B cell (primary cell): ENCODE measurements at regions of chr1 and their contacts with region 1.

Region 1: DNA sequence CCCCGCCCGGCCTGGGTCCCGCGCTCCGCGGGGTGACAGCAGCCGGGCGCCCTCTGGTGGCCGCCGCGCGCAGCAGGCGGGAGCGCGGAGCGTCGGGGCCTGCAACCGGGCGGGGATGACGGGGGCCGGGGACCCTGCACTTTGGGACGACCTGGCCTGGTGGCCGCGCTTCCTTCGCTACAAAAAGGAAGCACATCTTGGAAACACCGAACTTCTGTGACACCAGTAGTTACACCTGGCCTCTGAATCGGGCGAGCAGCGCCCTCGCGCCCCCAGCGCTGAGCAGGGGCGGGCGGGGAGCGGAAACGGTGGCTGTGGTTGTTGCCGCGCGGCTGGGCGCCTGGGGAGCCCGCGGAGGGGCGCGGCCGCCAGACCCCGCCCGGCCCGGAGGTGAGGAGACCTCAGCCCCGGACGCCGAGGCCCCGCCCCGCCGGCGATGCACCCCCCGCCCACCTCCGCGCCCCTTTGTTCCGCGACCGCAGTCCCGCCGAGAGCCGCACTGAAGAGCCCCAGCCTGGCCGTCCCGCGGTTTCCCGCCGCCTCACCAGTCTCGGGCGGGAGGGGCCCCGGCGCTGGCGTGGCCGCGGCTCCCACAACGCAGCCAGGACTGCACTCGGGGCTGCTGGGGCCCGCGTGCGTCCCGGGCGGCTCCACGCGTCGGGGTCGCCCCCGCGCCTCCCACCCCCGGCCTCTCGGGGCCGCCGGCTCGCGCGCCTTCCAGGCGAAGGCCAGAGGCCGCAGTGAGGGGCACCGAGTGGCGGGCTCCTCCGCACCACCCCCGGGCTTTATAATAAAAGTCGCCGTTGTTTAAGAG is 59.3 kb downstream of the H3-3A start:
- DNase-seq: peak; percentile 94
- ATAC-seq: peak; percentile 72
- H3K4me3 ChIP-seq: peak overlapping the region in 4 of 5 experiments; percentile 59 to 74 (median 62)
- H3K4me3 Mint-ChIP-seq: peak overlapping the region; percentile 90
- H3K27ac ChIP-seq: peak overlapping the region; percentile 96 to 97
- H3K27ac Mint-ChIP-seq: peak overlapping the region; percentile 99
- H3K4me1 ChIP-seq: peaks cover 68 to 75% of the 10 kb centered on the region in 2 donors
- H3K4me1 Mint-ChIP-seq: peaks cover 76% of the 10 kb centered on the region
- H3K27me3 ChIP-seq: no peaks in the 10 kb centered on the region
- H3K27me3 Mint-ChIP-seq: no peaks in the 10 kb centered on the region
- CTCF ChIP-seq: peak; percentile 79

Region 2: GRCh38 chr1:225467193-225468020 is 654.4 kb before region 1 on chr1:
- CTCF ChIA-PET with region 1: no interaction called
- POLR2A ChIA-PET with region 1: no interaction called
- intact Hi-C with region 1: loop called (anchors 5 kb)
- DNase-seq: peak; percentile 92
- ATAC-seq: peak; percentile 88
- H3K4me3 ChIP-seq: peak overlapping the region; percentile 68 to 83 (median 73)
- H3K4me3 Mint-ChIP-seq: peak overlapping the region; percentile 91
- H3K27ac ChIP-seq: peak overlapping the region; percentile 82 to 97
- H3K27ac Mint-ChIP-seq: peak overlapping the region; percentile 97
- H3K4me1 ChIP-seq: peaks cover 15 to 34% of the 10 kb centered on the region in 2 donors
- H3K4me1 Mint-ChIP-seq: peaks cover 37% of the 10 kb centered on the region
- H3K27me3 ChIP-seq: no peaks in the 10 kb centered on the region
- H3K27me3 Mint-ChIP-seq: no peaks in the 10 kb centered on the region
- CTCF ChIP-seq: no peak

Region 3: DNA sequence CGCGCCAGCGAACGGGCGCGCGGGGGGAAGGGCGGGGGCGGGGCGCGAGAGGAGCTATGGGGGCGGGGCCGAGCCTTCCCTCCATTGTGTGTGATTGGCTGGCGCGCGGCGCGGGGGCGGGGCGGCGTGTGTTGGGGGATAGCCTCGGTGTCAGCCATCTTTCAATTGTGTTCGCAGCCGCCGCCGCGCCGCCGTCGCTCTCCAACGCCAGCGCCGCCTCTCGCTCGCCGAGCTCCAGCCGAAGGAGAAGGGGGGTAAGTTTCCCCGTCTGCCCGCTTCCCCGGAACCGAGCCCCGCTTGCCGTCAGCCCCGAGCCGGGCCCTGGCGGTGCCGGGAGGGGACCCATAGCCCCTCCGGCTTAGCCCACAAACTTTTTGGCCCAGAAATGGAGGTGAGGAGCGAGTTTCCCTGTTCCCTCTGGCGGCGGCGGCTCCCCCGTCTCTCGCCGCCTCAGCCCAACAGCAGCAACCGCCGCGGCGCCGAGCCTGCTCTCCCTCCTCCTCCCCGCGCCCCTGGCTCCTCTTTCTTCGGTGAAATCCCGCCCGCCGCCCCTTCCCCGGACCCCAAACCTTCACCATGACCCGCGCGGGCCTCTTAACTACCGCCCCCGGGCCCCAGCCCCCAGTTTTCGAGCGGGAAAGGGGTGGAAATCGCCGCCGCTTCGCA is 59.1 kb before region 1 on chr1 and contains the start of gene H3-3A:
- CTCF ChIA-PET with region 1: interaction called, 76 read pairs
- POLR2A ChIA-PET with region 1: interaction called, 14 read pairs
- intact Hi-C with region 1: loop called (anchors 1 kb)
- DNase-seq: peak; percentile 98
- ATAC-seq: peak; percentile 81
- H3K4me3 ChIP-seq: peak within 1 kb of the TSS; percentile 86 to 100 (median 96)
- H3K4me3 Mint-ChIP-seq: peak within 1 kb of the TSS; percentile 100
- H3K27ac ChIP-seq: peak within 1 kb of the TSS; percentile 93 to 96
- H3K27ac Mint-ChIP-seq: peak within 1 kb of the TSS; percentile 99
- H3K4me1 ChIP-seq: peaks cover 33 to 34% of the 10 kb centered on the region in 2 donors
- H3K4me1 Mint-ChIP-seq: peaks cover 46% of the 10 kb centered on the region
- H3K27me3 ChIP-seq: no peaks in the 10 kb centered on the region
- H3K27me3 Mint-ChIP-seq: no peaks in the 10 kb centered on the region
- CTCF ChIP-seq: no peak
- total RNA-seq, gene H3-3A: 519 and 561 TPM in 2 replicates

Region 4: GRCh38 chr1:226135059-226135651 is 13.4 kb after region 1 on chr1:
- CTCF ChIA-PET with region 1: interaction called, 17 read pairs
- POLR2A ChIA-PET with region 1: interaction called, 9 read pairs
- intact Hi-C with region 1: no loop called
- DNase-seq: no peak
- ATAC-seq: no peak
- H3K4me3 ChIP-seq: no peak overlapping the region
- H3K4me3 Mint-ChIP-seq: no peak overlapping the region
- H3K27ac ChIP-seq: peak overlapping the region in 1 of 2 donors; percentile 57
- H3K27ac Mint-ChIP-seq: peak overlapping the region; percentile 99
- H3K4me1 ChIP-seq: peaks cover 46 to 54% of the 10 kb centered on the region in 2 donors
- H3K4me1 Mint-ChIP-seq: peaks cover 53% of the 10 kb centered on the region
- H3K27me3 ChIP-seq: no peaks in the 10 kb centered on the region
- H3K27me3 Mint-ChIP-seq: no peaks in the 10 kb centered on the region
- CTCF ChIP-seq: no peak

Region 5: DNA sequence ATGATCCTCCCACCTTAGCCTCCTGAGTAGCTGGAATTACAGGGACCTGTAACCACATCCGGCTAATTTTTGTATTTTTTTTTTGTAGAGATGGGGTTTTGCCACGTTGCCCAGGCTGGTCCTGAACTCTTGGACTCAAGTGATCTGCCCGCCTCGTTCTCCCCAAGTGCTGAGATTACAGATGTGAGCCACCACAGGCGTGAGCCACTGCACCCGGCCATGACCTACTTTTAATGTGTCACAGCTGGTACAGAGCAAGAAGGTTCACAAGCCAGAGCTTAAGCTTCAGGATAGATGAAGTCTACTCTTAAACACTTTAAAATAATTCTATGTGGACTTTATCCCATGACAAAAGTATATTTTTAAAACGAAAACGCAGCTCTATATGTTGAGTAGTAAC is 41.1 kb after region 1 on chr1:
- CTCF ChIA-PET with region 1: interaction called, 22 read pairs
- POLR2A ChIA-PET with region 1: no interaction called
- intact Hi-C with region 1: loop called (anchors 5 kb)
- DNase-seq: no peak
- ATAC-seq: no peak
- H3K4me3 ChIP-seq: no peak overlapping the region
- H3K4me3 Mint-ChIP-seq: no peak overlapping the region
- H3K27ac ChIP-seq: peak overlapping the region in 1 of 2 donors; percentile 42
- H3K27ac Mint-ChIP-seq: peak overlapping the region; percentile 46
- H3K4me1 ChIP-seq: peaks cover 30% of the 10 kb centered on the region in 2 donors
- H3K4me1 Mint-ChIP-seq: peaks cover 51% of the 10 kb centered on the region
- H3K27me3 ChIP-seq: no peaks in the 10 kb centered on the region
- H3K27me3 Mint-ChIP-seq: no peaks in the 10 kb centered on the region
- CTCF ChIP-seq: no peak

Region 6: DNA sequence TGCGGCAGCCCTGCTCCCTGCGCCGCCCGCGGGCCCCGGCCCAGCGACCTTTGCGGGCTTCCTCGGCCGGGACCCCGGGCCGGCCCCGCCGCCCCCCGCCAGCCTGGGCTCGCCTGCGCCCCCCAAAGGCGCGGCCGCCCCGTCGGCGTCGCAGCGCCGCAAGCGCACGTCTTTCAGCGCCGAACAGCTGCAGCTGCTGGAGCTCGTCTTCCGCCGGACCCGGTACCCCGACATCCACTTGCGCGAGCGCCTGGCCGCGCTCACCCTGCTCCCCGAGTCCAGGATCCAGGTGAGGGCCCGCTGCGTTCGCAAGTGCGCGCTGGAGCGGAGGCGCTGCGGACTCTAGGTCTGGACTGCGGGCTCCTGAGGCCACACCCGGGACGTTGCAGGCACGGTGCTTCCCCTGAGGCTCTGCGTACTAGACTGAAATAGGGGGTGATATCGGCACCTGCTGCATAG is 102.0 kb after region 1 on chr1:
- CTCF ChIA-PET with region 1: interaction called, 11 read pairs
- POLR2A ChIA-PET with region 1: no interaction called
- intact Hi-C with region 1: no loop called
- DNase-seq: peak; percentile 71
- ATAC-seq: peak; percentile 76
- H3K4me3 ChIP-seq: peak overlapping the region in 4 of 5 experiments; percentile 49 to 65 (median 57)
- H3K4me3 Mint-ChIP-seq: peak overlapping the region; percentile 92
- H3K27ac ChIP-seq: no peak overlapping the region
- H3K27ac Mint-ChIP-seq: peak overlapping the region; percentile 53
- H3K4me1 ChIP-seq: peaks cover 5 to 16% of the 10 kb centered on the region in 2 donors
- H3K4me1 Mint-ChIP-seq: peaks cover 8% of the 10 kb centered on the region
- H3K27me3 ChIP-seq: peaks cover 0 to 28% (median 9%) of the 10 kb centered on the region in 4 experiments
- H3K27me3 Mint-ChIP-seq: peaks cover 8% of the 10 kb centered on the region
- CTCF ChIP-seq: no peak

Region 7: GRCh38 chr1:226407497-226408284 is 285.9 kb after region 1 on chr1 and contains the start of gene PARP1:
- CTCF ChIA-PET with region 1: interaction called, 24 read pairs
- POLR2A ChIA-PET with region 1: interaction called, 8 read pairs
- intact Hi-C with region 1: loop called (anchors 2 kb)
- DNase-seq: peak; percentile 94
- ATAC-seq: peak; percentile 83
- H3K4me3 ChIP-seq: peak within 1 kb of the TSS; percentile 81 to 95 (median 83)
- H3K4me3 Mint-ChIP-seq: peak within 1 kb of the TSS; percentile 91
- H3K27ac ChIP-seq: peak within 1 kb of the TSS; percentile 78 to 88
- H3K27ac Mint-ChIP-seq: peak within 1 kb of the TSS; percentile 93
- H3K4me1 ChIP-seq: peaks cover 45 to 46% of the 10 kb centered on the region in 2 donors
- H3K4me1 Mint-ChIP-seq: peaks cover 43% of the 10 kb centered on the region
- H3K27me3 ChIP-seq: no peaks in the 10 kb centered on the region
- H3K27me3 Mint-ChIP-seq: no peaks in the 10 kb centered on the region
- CTCF ChIP-seq: peak; percentile 88
- total RNA-seq, gene PARP1: 180 and 187 TPM in 2 replicates